ENCODE measurements at regions of chr11 and their contacts with region 1.

Region 1: DNA sequence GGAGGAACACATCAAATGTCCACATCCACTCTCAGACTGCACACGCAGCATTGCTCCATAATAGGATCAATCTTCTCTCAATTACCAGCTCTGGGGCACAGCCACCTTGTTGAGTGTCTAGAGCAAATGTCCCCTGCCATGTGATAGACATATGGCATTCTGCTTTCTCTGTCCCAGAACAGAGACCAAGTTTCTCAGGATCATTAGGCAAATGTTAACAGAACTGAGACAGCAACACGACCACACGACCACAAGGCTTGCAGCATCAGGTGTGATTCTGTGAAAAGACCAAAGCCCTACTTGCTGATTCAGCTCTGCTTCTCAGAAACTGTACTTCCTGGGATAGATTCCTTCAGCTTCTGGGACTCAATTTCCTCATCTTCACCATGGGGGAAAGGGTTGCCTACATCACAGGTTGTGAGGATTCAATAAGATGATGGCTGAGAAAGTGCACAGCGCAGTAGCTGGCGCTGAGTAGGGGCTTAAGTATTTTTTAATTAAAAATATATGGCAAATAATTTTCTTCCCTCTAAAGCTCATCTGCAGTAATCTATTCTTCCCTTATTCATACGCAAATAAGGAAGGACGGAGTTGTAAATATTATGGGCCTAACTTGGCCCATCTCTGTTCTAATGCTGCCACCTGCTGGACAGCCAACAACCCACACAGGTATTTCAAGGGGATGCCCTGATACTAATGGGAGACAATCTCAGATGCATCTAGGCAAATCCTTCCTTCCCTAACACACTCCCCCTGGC is 54.3 kb upstream of the USP47 start:
- DNase-seq: peak; percentile 54 to 83 (median 65)
- ATAC-seq: peak; percentile 88
- H3K4me3 ChIP-seq: no peak overlapping the region
- H3K4me3 Mint-ChIP-seq: no peak overlapping the region
- H3K27ac ChIP-seq: no peak overlapping the region
- H3K27ac Mint-ChIP-seq: no peak overlapping the region
- H3K4me1 ChIP-seq: no peaks in the 10 kb centered on the region
- H3K4me1 Mint-ChIP-seq: no peaks in the 10 kb centered on the region
- H3K27me3 ChIP-seq: no peaks in the 10 kb centered on the region
- H3K27me3 Mint-ChIP-seq: peaks cover 6% of the 10 kb centered on the region
- CTCF ChIP-seq: peak; percentile 92

Region 2: DNA sequence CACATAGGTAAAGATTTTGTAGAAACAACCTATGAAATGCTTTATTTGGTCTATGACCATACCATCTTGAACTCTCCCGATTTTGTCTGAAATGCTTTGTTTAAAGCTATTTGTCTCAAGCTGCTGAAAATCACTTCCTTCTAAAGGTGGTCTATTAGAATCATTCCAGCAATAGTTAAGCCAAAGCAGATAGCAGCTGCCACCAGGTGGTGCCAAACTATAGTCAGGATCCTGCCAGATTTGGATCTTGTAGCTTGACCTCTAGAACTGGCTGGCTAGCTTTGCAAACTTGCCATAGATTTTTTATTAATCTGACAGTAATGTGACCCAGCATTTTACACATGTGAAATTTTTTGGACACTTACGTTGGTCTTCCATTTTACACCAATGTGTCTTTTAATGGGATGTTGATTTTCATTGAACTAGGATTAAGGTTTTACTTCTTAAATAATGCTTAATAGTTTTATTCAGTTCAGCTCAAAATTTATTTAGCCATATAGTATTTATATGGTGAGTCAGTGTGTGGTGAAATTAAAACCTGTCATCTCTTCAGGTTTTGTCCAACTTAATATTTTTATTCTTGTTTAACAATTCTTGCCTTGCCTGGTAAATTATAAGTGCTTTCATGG is 1016.7 kb before region 1 on chr11:
- CTCF ChIA-PET with region 1: no interaction called
- POLR2A ChIA-PET with region 1: no interaction called
- intact Hi-C with region 1: loop called (anchors 1 to 5 kb)
- DNase-seq: peak in 6 of 14 experiments; percentile 12 to 43 (median 34)
- ATAC-seq: no peak
- H3K4me3 ChIP-seq: no peak overlapping the region
- H3K4me3 Mint-ChIP-seq: no peak overlapping the region
- H3K27ac ChIP-seq: no peak overlapping the region
- H3K27ac Mint-ChIP-seq: no peak overlapping the region
- H3K4me1 ChIP-seq: no peaks in the 10 kb centered on the region
- H3K4me1 Mint-ChIP-seq: no peaks in the 10 kb centered on the region
- H3K27me3 ChIP-seq: no peaks in the 10 kb centered on the region
- H3K27me3 Mint-ChIP-seq: no peaks in the 10 kb centered on the region
- CTCF ChIP-seq: peak; percentile 58

Region 3: GRCh38 chr11:12581923-12582322 is 794.4 kb after region 1 on chr11:
- CTCF ChIA-PET with region 1: no interaction called
- POLR2A ChIA-PET with region 1: no interaction called
- intact Hi-C with region 1: no loop called
- DNase-seq: no peak
- ATAC-seq: no peak
- H3K4me3 ChIP-seq: no peak overlapping the region
- H3K4me3 Mint-ChIP-seq: no peak overlapping the region
- H3K27ac ChIP-seq: no peak overlapping the region
- H3K27ac Mint-ChIP-seq: no peak overlapping the region
- H3K4me1 ChIP-seq: no peaks in the 10 kb centered on the region
- H3K4me1 Mint-ChIP-seq: peaks cover under 1% of the 10 kb centered on the region
- H3K27me3 ChIP-seq: peaks cover 0 to 4% of the 10 kb centered on the region in 2 experiments
- H3K27me3 Mint-ChIP-seq: peaks cover 26% of the 10 kb centered on the region
- CTCF ChIP-seq: no peak